ENCODE measurements at regions of chr5 and their contacts with region 1.

Region 1: DNA sequence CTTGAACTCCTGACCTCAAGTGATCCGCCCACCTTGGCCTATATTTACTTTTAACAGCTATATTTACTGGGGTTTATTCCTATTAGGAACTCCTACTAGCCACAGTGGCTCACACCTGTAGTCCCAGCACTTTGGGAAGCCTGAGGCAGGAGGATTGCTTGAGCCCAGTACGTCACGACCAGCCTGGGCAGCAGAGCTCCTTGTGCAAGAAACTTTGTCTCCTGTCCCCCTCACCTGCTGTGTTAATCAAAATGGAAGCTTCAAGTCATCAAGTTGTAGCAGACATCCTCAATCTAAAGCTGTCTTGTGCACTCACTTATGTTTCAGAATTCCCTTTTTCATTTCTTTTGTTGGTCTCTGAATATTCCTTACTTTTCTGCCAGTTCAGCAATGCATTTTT is 15.0 kb upstream of the SPRY4 start:
- DNase-seq: no peak
- H3K4me3 ChIP-seq: no peak overlapping the region
- H3K4me3 Mint-ChIP-seq: no peak overlapping the region
- H3K27ac ChIP-seq: no peak overlapping the region
- H3K27ac Mint-ChIP-seq: no peak overlapping the region
- H3K4me1 ChIP-seq: no peaks in the 10 kb centered on the region
- H3K4me1 Mint-ChIP-seq: no peaks in the 10 kb centered on the region
- H3K27me3 ChIP-seq: no peaks in the 10 kb centered on the region
- H3K27me3 Mint-ChIP-seq: peaks cover 5 to 19% of the 10 kb centered on the region in 2 donors

Region 2: GRCh38 chr5:142356716-142357473 is 17.1 kb after region 1 on chr5:
- CTCF ChIA-PET with region 1: no interaction called
- POLR2A ChIA-PET with region 1: interaction called, 10 read pairs
- DNase-seq: peak; percentile 80 to 91 (median 89)
- H3K4me3 ChIP-seq: peak overlapping the region; percentile 81
- H3K4me3 Mint-ChIP-seq: peak overlapping the region; percentile 85 to 97 (median 88)
- H3K27ac ChIP-seq: peak overlapping the region; percentile 60
- H3K27ac Mint-ChIP-seq: peak overlapping the region; percentile 79 to 98 (median 90)
- H3K4me1 ChIP-seq: peaks cover 39% of the 10 kb centered on the region
- H3K4me1 Mint-ChIP-seq: peaks cover 39 to 59% (median 50%) of the 10 kb centered on the region in 3 donors
- H3K27me3 ChIP-seq: no peaks in the 10 kb centered on the region
- H3K27me3 Mint-ChIP-seq: peaks cover 0 to 3% of the 10 kb centered on the region in 2 donors